A549 (cell line): ENCODE measurements at regions of chr19 and their contacts with region 1.

Region 1: GRCh38 chr19:10424011-10424637 is 3.8 kb downstream of the PDE4A start:
- DNase-seq: peak; percentile 82 to 89
- ATAC-seq: peak; percentile 70 to 88
- H3K4me3 ChIP-seq: peak overlapping the region; percentile 45
- H3K27ac ChIP-seq: peak overlapping the region; percentile 45 to 80
- H3K4me1 ChIP-seq: peaks cover 17% of the 10 kb centered on the region
- CTCF ChIP-seq: peak; percentile 72
- EP300 ChIP-seq: no peak
- POLR2A ChIP-seq: no peak
- RAD21 ChIP-seq: peak; percentile 29 to 46; a peak in 4 of 5 replicates

Region 2: DNA sequence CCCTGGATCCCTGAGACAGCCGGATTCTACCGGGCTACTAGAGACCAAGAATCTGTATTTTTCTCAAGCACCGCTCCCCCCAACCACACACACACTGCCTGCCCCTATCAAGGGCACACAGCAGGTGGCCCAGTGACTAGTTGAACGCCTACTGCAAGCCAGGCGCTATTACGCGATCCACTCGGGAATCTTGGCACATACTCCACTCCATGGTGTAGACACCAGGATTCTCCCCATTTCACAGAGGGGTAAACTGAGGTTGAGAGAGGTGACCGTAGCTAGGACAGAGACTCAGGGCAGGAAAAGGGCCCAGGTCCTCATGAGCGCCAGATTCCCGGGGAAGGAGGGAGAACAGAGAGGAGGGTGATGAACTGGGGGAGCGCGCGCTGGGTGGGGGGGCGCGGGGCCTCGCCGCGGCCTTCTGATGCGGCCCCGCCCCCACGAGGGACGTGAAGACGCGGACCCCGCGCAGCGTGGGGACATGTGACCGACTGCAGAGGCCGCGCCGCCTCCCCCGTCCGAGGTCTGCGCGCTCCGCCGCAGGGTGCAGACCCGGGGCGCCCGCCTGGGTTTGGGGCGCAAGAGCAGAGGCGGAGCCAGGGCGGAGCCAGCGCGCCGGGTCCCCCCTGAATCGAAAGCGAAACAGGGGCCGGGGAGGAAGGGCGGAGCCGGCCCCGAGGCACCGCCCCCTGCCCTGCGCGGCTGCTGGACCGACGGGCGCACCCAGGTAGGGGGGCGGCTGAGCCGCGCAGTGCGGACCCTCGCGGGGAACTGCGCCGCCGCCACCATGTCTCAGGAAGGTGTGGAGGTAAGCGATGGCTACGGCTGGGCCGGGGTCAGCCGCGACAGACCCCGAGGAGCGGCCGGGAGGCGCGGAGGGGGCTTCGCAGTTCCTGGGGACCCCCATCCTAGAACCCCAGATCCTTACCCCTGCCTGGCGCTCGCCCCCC is 338.2 kb before region 1 on chr19 and contains the start of gene SHFL:
- CTCF ChIA-PET with region 1: no interaction called
- POLR2A ChIA-PET with region 1: no interaction called
- DNase-seq: peak in 1 of 2 experiments; percentile 44
- ATAC-seq: peak; percentile 91
- H3K4me3 ChIP-seq: peak within 1 kb of the TSS; percentile 80
- H3K27ac ChIP-seq: peak within 1 kb of the TSS; percentile 91 to 98
- H3K4me1 ChIP-seq: peaks cover 4% of the 10 kb centered on the region; the same call in 2 of the 3 replicates
- CTCF ChIP-seq: no peak
- EP300 ChIP-seq: no peak
- POLR2A ChIP-seq: no peak
- RAD21 ChIP-seq: no peak
- polyA plus RNA-seq, gene SHFL: 9.1 and 10.1 TPM in 2 replicates

Region 3: DNA sequence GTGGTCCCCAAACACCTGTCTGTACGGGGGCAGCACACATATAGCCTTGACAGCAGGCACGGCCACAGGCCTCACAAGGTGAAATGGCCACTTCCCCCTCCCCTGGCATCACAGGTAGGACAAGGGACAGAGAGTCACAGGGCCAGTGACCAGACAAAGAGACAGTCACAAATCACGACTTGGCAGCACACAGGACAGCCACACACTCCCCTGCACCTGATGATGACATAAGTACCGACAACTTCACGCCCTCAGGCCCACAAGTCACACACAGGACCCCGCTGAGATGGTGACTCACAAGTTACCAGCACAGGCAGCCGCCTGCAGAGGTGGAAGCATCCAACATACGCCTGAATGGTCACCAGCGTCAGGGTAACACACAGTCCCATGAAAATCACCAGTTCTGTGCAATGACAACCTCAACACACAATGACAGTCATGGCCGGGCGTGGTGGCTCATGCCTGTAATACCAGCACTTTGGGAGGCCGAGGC is 60.3 kb before region 1 on chr19:
- CTCF ChIA-PET with region 1: no interaction called
- POLR2A ChIA-PET with region 1: no interaction called
- DNase-seq: no peak
- ATAC-seq: no peak
- H3K4me3 ChIP-seq: no peak overlapping the region
- H3K27ac ChIP-seq: no peak overlapping the region
- H3K4me1 ChIP-seq: no peaks in the 10 kb centered on the region
- CTCF ChIP-seq: no peak
- EP300 ChIP-seq: no peak
- POLR2A ChIP-seq: no peak
- RAD21 ChIP-seq: no peak

Region 4: DNA sequence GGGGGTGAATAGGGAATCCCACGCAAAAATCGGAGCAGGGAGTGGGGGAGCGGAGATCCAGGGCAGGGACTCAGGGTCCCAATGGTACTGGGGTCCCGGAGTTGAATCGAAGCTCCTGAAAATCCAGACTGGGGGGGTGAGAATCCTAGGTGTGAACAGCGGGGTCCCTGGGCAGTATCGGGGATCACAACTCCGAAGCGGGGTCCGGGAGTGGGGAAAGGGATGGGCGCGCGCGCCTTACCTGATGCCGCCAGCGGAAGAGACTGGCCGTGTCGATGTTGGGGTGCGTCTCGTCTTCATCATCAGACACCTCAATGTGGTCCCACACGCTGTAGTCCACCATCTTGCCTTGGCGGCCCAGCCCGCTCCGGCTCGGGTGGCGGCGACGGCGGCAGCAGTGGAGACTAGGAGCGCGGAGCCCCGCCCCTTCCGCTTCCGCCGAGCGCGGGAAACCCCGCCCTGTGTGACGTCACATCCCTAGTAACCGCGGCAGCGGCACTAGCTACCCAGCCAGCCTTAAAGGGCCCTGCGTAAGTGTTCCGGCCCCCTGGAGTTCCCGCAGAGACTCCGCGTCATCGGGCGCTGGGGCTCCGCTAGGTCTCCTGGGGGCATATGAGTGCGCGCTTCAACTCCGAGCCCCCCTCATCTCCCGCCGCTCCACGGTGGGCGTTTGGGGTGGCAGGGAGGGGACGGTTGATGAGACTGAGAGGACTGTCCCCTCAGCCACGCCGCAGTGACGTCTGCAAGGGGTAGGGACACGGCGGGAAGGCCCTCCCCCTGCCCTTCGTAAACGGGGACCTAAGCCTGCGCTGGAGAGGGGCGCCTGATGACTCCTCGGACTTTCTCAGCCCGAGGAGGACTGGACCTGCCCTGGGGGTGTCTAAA is 20.7 kb before region 1 on chr19 and contains the start of gene CDC37:
- CTCF ChIA-PET with region 1: interaction called, 22 read pairs
- POLR2A ChIA-PET with region 1: no interaction called
- DNase-seq: peak; percentile 93 to 95
- ATAC-seq: peak; percentile 87 to 89
- H3K4me3 ChIP-seq: peak within 1 kb of the TSS; percentile 94
- H3K27ac ChIP-seq: peak within 1 kb of the TSS; percentile 82 to 94
- H3K4me1 ChIP-seq: peaks cover 23% of the 10 kb centered on the region
- CTCF ChIP-seq: no peak
- EP300 ChIP-seq: no peak
- POLR2A ChIP-seq: peak; percentile 89
- RAD21 ChIP-seq: no peak
- polyA plus RNA-seq, gene CDC37: 125 and 152 TPM in 2 replicates

Region 5: DNA sequence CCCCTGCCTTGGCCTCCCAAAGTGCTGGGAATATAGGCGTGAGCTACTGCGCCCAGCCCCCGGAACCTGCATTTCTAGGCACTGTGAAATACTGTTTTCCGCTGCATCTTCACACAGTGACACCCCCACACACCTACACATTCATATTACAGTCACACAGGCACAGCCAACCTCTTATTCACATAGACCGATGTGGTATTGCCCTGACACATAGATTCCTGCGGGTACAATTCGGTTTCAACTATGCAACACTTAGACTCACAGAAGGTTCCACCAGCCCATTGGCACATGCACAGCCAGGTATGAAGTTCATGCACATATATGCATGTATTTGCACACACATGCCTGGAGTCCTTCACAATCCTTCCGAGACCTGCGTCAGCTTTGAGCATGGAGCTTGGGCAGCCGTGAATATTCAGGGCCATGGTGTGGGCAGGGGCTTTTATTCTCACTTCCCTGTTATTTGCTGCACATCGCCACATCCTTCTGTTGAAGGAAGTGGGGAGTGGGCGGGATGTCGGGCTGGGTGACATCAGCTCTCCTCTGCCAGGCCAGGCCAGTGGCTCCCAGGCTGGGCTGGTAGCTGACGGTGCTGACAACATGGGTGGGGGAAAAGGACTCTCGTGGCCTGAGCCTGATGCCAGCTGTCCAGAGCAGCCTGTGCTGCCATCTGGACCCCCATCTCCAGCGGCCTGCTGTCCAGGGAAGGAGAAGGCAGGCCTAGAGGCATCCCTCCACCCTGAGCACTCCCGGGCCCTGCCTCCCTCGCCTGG is 15.4 kb before region 1 on chr19:
- CTCF ChIA-PET with region 1: interaction called, 22 read pairs
- POLR2A ChIA-PET with region 1: no interaction called
- DNase-seq: no peak
- ATAC-seq: no peak
- H3K4me3 ChIP-seq: no peak overlapping the region
- H3K27ac ChIP-seq: no peak overlapping the region
- H3K4me1 ChIP-seq: peaks cover 5% of the 10 kb centered on the region; the same call in 2 of the 3 replicates
- CTCF ChIP-seq: no peak
- EP300 ChIP-seq: no peak
- POLR2A ChIP-seq: no peak
- RAD21 ChIP-seq: no peak

Region 6: GRCh38 chr19:10513221-10513620 is 89.1 kb after region 1 on chr19:
- CTCF ChIA-PET with region 1: no interaction called
- POLR2A ChIA-PET with region 1: no interaction called
- DNase-seq: no peak
- ATAC-seq: no peak
- H3K4me3 ChIP-seq: no peak overlapping the region
- H3K27ac ChIP-seq: no peak overlapping the region
- H3K4me1 ChIP-seq: peaks cover 19% of the 10 kb centered on the region; the same call in 2 of the 3 replicates
- CTCF ChIP-seq: no peak
- EP300 ChIP-seq: no peak
- POLR2A ChIP-seq: no peak
- RAD21 ChIP-seq: no peak